Transverse colon (tissue), 4 donors: ENCODE measurements at regions of chr15 and their contacts with region 1.

Region 1: DNA sequence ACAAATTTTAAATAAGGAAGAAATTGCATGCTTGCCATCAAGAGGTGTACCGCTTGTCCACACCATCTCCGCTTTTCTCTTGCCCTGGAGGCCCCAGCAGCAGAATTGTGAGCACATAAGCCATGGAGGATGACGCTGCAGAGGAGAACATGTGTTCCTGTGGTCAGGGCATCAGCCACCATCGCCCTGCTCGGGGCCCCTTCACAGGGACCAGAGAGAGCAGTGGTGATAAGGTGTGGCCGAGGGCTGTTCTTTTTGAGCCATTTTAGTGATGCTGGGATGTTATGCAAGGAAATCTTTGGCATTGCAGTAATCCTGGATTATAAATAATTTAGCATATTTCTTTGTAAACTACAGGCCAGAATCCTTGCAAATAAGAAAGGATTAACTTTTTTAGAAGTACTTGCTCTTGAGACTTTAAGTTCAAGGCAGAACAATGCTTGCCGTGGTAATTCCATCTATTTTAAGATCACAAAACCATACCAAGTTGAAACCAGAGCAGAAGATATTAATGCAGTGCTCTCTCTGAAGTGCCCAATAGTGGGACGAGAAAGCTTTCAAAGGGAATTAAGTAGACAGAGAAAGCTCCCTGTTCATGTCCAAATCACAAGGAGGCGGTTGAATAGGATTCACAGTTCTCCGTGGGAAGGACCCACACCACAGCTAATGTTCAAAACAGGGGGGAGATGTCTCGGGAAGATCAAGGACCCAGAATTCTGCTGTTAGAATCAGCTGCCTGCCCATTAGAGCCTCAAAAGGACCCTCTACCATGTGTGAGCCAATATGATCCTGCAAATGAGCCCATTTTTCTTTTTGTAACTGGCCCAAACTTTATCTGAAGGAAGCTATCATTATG is 338.5 kb downstream of the RORA start:
- DNase-seq: no peak
- H3K4me3 ChIP-seq: no peak overlapping the region
- H3K27ac ChIP-seq: no peak overlapping the region
- H3K4me1 ChIP-seq: no peaks in the 10 kb centered on the region
- H3K27me3 ChIP-seq: no peaks in the 10 kb centered on the region
- CTCF ChIP-seq: no peak
- EP300 ChIP-seq: no peak
- POLR2A ChIP-seq: no peak

Region 2: DNA sequence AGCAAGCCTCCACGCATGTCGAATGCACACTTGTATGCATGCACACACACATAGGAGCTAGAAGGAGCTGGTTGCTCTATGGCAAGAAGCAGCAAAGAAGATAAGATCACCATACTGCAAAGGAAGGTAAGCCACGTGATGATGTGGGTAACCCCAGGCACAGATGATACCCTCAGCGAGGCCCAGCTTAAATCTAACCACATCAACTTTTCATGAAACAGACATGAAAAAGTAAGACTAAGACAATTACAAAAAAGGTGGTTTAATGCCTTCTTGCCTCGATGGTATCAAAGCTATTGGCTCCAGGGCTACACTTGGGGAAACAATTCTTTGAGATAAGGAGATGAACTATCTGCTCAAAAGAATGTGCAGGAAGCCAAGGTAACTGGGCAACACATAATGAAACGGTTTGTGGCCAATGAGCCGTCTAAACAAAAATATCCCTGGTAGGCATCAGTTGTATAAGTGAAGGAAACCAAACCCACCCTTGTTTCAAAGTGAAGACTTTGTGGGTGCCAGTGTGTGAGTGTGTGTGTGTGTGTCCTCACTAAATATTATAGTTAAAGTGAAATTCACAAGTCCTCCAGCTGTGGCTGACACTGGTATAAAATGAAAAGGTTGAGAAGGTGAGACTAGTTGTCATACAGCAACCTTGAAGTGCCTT is 46.0 kb before region 1 on chr15:
- in situ Hi-C with region 1: no loop called
- intact Hi-C with region 1: loop called (anchors 1 kb)
- DNase-seq: peak; percentile 24
- H3K4me3 ChIP-seq: no peak overlapping the region
- H3K27ac ChIP-seq: no peak overlapping the region
- H3K4me1 ChIP-seq: peaks cover 0 to 3% (median 0%) of the 10 kb centered on the region in 4 donors
- H3K27me3 ChIP-seq: no peaks in the 10 kb centered on the region
- CTCF ChIP-seq: no peak
- EP300 ChIP-seq: no peak
- POLR2A ChIP-seq: no peak